Activated CD4-positive, alpha-beta T cell treated with anti-CD3 and anti-CD28 coated beads for 36 hours (primary cell): ENCODE measurements at regions of chr17 and their contacts with region 1.

Region 1: GRCh38 chr17:28661635-28662537 is at the starts of genes SDF2 and SUPT6H:
- DNase-seq: peak; percentile 98
- ATAC-seq: peak; percentile 87
- H3K4me3 Mint-ChIP-seq: peak within 1 kb of the TSS; percentile 94
- H3K27ac Mint-ChIP-seq: peak within 1 kb of the TSS; percentile 99
- H3K4me1 Mint-ChIP-seq: peaks cover 48% of the 10 kb centered on the region
- H3K27me3 Mint-ChIP-seq: no peaks in the 10 kb centered on the region
- total RNA-seq, gene SDF2: 36.6 to 37.2 TPM
- total RNA-seq, gene SUPT6H: 80.6 to 85.8 TPM

Region 2: DNA sequence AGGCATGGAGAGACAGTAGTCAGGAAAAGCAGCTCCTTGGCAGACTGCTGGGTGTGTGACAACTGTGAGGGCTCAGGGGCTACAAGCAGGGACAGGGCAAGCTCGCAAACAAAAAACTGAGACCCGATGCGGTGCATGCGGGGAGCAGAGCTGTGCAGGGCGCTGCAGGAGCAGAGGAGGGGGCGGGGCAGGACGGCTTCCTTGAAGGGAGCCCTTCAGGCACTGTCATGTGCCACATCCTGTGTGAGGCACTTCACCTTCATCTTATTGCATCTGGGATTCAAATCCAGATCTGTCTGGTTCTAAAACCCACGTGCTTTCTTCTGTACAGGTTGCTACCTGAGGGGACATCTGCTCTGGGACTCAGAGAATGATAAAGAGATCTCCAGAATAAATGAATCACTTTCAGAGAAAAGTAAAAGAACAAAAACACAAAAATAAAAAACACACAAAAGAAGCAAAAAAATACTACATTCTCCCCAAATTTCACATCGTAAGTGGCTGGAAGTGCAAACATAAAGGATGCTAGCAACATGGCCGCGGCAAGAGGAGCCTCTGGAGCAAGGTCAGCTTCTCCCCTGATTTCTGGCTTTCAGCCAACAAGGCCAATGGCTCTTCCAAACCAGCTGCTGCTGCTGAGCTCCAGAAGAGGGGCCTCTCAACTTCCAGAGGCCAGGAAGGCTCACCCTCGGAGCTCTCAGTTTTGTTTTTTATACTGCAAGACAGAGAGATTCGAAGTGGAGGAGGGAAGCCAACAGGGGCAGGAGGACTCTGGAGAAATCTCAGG is 782.9 kb before region 1 on chr17:
- CTCF ChIA-PET with region 1: no interaction called
- POLR2A ChIA-PET with region 1: no interaction called
- intact Hi-C with region 1: no loop called
- DNase-seq: peak; percentile 78
- ATAC-seq: peak; percentile 86
- H3K4me3 Mint-ChIP-seq: no peak overlapping the region
- H3K27ac Mint-ChIP-seq: peak overlapping the region; percentile 58
- H3K4me1 Mint-ChIP-seq: peaks cover 17% of the 10 kb centered on the region
- H3K27me3 Mint-ChIP-seq: no peaks in the 10 kb centered on the region

Region 3: GRCh38 chr17:28576758-28577465 is 85.0 kb before region 1 on chr17 and contains the start of gene ALDOC:
- CTCF ChIA-PET with region 1: interaction called, 4 read pairs
- POLR2A ChIA-PET with region 1: no interaction called
- intact Hi-C with region 1: loop called in 1 of 2 experiments (anchors 5 kb)
- DNase-seq: peak; percentile 99
- ATAC-seq: peak; percentile 92
- H3K4me3 Mint-ChIP-seq: peak within 1 kb of the TSS; percentile 87
- H3K27ac Mint-ChIP-seq: peak within 1 kb of the TSS; percentile 82
- H3K4me1 Mint-ChIP-seq: peaks cover 43% of the 10 kb centered on the region
- H3K27me3 Mint-ChIP-seq: no peaks in the 10 kb centered on the region
- total RNA-seq, gene ALDOC: 131 to 133 TPM

Region 4: GRCh38 chr17:28598799-28599310 is 63.0 kb before region 1 on chr17 and contains the start of gene SPAG5:
- CTCF ChIA-PET with region 1: no interaction called
- POLR2A ChIA-PET with region 1: interaction called, 3 read pairs
- intact Hi-C with region 1: loop called in 1 of 2 experiments (anchors 1 kb)
- DNase-seq: peak; percentile 97
- ATAC-seq: peak; percentile 92
- H3K4me3 Mint-ChIP-seq: peak within 1 kb of the TSS; percentile 89
- H3K27ac Mint-ChIP-seq: peak within 1 kb of the TSS; percentile 98
- H3K4me1 Mint-ChIP-seq: peaks cover 21% of the 10 kb centered on the region
- H3K27me3 Mint-ChIP-seq: no peaks in the 10 kb centered on the region
- total RNA-seq, gene SPAG5: 142 to 165 TPM

Region 5: GRCh38 chr17:28710861-28711722 is 49.2 kb after region 1 on chr17:
- CTCF ChIA-PET with region 1: interaction called, 5 read pairs
- POLR2A ChIA-PET with region 1: interaction called, 9 read pairs
- intact Hi-C with region 1: loop called (anchors 1 to 5 kb)
- DNase-seq: peak; percentile 94
- ATAC-seq: peak; percentile 90
- H3K4me3 Mint-ChIP-seq: peak overlapping the region; percentile 80
- H3K27ac Mint-ChIP-seq: peak overlapping the region; percentile 91
- H3K4me1 Mint-ChIP-seq: peaks cover 19% of the 10 kb centered on the region
- H3K27me3 Mint-ChIP-seq: peaks cover 17% of the 10 kb centered on the region

Region 6: GRCh38 chr17:28716740-28717577 is 55.1 kb after region 1 on chr17:
- CTCF ChIA-PET with region 1: interaction called, 8 read pairs
- POLR2A ChIA-PET with region 1: interaction called, 9 read pairs
- intact Hi-C with region 1: loop called (anchors 1 to 5 kb)
- DNase-seq: peak; percentile 29
- ATAC-seq: no peak
- H3K4me3 Mint-ChIP-seq: peak overlapping the region; percentile 57
- H3K27ac Mint-ChIP-seq: no peak overlapping the region
- H3K4me1 Mint-ChIP-seq: peaks cover 30% of the 10 kb centered on the region
- H3K27me3 Mint-ChIP-seq: peaks cover 19% of the 10 kb centered on the region

Region 7: GRCh38 chr17:28777178-28777577 is 115.3 kb after region 1 on chr17:
- CTCF ChIA-PET with region 1: no interaction called
- POLR2A ChIA-PET with region 1: no interaction called
- intact Hi-C with region 1: no loop called
- DNase-seq: no peak
- ATAC-seq: no peak
- H3K4me3 Mint-ChIP-seq: no peak overlapping the region
- H3K27ac Mint-ChIP-seq: peak overlapping the region; percentile 32
- H3K4me1 Mint-ChIP-seq: peaks cover 35% of the 10 kb centered on the region
- H3K27me3 Mint-ChIP-seq: no peaks in the 10 kb centered on the region

Region 8: GRCh38 chr17:28902819-28903545 is 241.1 kb after region 1 on chr17 and contains the start of gene DHRS13:
- CTCF ChIA-PET with region 1: no interaction called
- POLR2A ChIA-PET with region 1: no interaction called
- intact Hi-C with region 1: loop called in 1 of 2 experiments (anchors 5 kb)
- DNase-seq: peak; percentile 97
- ATAC-seq: peak; percentile 89
- H3K4me3 Mint-ChIP-seq: peak within 1 kb of the TSS; percentile 87
- H3K27ac Mint-ChIP-seq: peak within 1 kb of the TSS; percentile 92
- H3K4me1 Mint-ChIP-seq: peaks cover 34% of the 10 kb centered on the region
- H3K27me3 Mint-ChIP-seq: no peaks in the 10 kb centered on the region
- total RNA-seq, gene DHRS13: 23.3 to 29.5 TPM